ENCODE measurements at regions of chr11 and their contacts with region 1.

Region 1: GRCh38 chr11:123163621-123164020 is 31.4 kb downstream of the CLMP start:
- DNase-seq: no peak
- H3K4me3 Mint-ChIP-seq: no peak overlapping the region
- H3K27ac Mint-ChIP-seq: no peak overlapping the region
- H3K4me1 Mint-ChIP-seq: peaks cover 14% of the 10 kb centered on the region
- H3K27me3 Mint-ChIP-seq: peaks cover 5% of the 10 kb centered on the region

Region 2: GRCh38 chr11:122920579-122920978 is 243.0 kb before region 1 on chr11:
- CTCF ChIA-PET with region 1: no interaction called
- POLR2A ChIA-PET with region 1: no interaction called
- DNase-seq: no peak
- H3K4me3 Mint-ChIP-seq: no peak overlapping the region
- H3K27ac Mint-ChIP-seq: no peak overlapping the region
- H3K4me1 Mint-ChIP-seq: no peaks in the 10 kb centered on the region
- H3K27me3 Mint-ChIP-seq: no peaks in the 10 kb centered on the region

Region 3: GRCh38 chr11:123174196-123175183 is 10.9 kb after region 1 on chr11:
- CTCF ChIA-PET with region 1: interaction called, 15 read pairs
- POLR2A ChIA-PET with region 1: no interaction called
- DNase-seq: no peak
- H3K4me3 Mint-ChIP-seq: no peak overlapping the region
- H3K27ac Mint-ChIP-seq: no peak overlapping the region
- H3K4me1 Mint-ChIP-seq: peaks cover 6% of the 10 kb centered on the region
- H3K27me3 Mint-ChIP-seq: peaks cover 1% of the 10 kb centered on the region

Region 4: GRCh38 chr11:123393312-123393927 is 229.8 kb after region 1 on chr11:
- CTCF ChIA-PET with region 1: no interaction called
- POLR2A ChIA-PET with region 1: no interaction called
- DNase-seq: no peak
- H3K4me3 Mint-ChIP-seq: no peak overlapping the region
- H3K27ac Mint-ChIP-seq: no peak overlapping the region
- H3K4me1 Mint-ChIP-seq: peaks cover 33% of the 10 kb centered on the region
- H3K27me3 Mint-ChIP-seq: peaks cover 2% of the 10 kb centered on the region

Measured in activated CD4-positive, alpha-beta T cell treated with anti-CD3 and anti-CD28 coated beads, Interleukin-2, amount 10 ng/mL, durations not matched to agents 7 days and 5 days (primary cell).